HepG2 (cell line): ENCODE measurements at regions of chr16 and their contacts with region 1.

Region 1: GRCh38 chr16:57084257-57084770 is 8.1 kb upstream of the CPNE2 start:
- DNase-seq: peak; percentile 54
- ATAC-seq: peak; percentile 70
- H3K4me3 ChIP-seq: no peak overlapping the region
- H3K27ac ChIP-seq: no peak overlapping the region
- H3K4me1 ChIP-seq: peaks cover 15% of the 10 kb centered on the region
- H3K27me3 ChIP-seq: peaks cover 2 to 23% of the 10 kb centered on the region in 2 experiments; a peak in 4 of 5 replicates
- CTCF ChIP-seq: peak; percentile 97
- EP300 ChIP-seq: no peak
- POLR2A ChIP-seq: no peak
- RAD21 ChIP-seq: peak; percentile 88

Region 2: GRCh38 chr16:57167953-57168352 is 83.6 kb after region 1 on chr16:
- CTCF ChIA-PET with region 1: interaction called, 16 read pairs
- POLR2A ChIA-PET with region 1: no interaction called
- in situ Hi-C with region 1: no loop called
- intact Hi-C with region 1: loop called (anchors 2 kb)
- DNase-seq: peak; percentile 53
- ATAC-seq: peak; percentile 68
- H3K4me3 ChIP-seq: no peak overlapping the region
- H3K27ac ChIP-seq: no peak overlapping the region
- H3K4me1 ChIP-seq: peaks cover 9% of the 10 kb centered on the region
- H3K27me3 ChIP-seq: no peaks in the 10 kb centered on the region
- CTCF ChIP-seq: peak; percentile 77
- EP300 ChIP-seq: no peak
- POLR2A ChIP-seq: no peak
- RAD21 ChIP-seq: peak; percentile 49; the same call in 1 of the 2 replicates

Region 3: DNA sequence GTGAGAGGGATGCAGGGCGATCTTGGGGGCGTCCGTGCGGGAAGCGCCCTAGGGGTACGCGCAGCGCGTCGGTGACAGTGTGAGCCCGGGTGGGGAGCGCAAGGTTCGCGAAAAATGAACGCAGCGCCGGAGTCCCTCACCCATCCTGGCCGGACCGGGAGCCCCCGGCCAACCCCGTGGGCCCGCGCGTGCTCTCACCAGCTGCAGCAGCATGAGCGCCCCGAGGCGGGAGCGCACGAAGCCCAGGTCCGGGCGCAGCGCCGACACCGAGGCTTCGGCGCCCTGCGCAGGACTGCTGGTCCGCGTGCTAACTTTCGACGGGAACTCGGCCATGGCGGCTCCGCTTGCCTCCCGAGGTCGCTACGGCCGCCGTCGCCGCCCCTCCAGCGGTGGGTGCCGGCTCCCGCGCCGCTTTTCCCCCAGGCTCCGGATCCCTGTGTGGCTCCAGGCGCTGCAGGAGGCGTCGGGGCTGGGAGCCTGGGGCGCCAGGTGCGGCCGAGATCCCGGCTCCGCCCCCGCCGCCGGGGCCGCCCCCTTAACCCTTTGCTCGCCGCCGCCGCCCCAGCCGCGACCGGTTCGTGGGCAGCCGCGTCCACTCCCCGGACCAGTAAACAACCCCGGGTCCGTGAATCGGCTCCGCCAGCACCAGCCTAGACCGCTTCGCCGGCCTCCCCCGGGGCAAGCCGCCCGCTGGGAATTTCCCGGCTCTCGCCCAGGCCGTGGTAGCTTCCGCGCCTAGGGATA is 200.1 kb after region 1 on chr16 and contains the start of gene PLLP:
- CTCF ChIA-PET with region 1: no interaction called
- POLR2A ChIA-PET with region 1: no interaction called
- in situ Hi-C with region 1: no loop called
- intact Hi-C with region 1: loop called (anchors 5 kb)
- DNase-seq: no peak
- ATAC-seq: peak; percentile 68
- H3K4me3 ChIP-seq: peak within 1 kb of the TSS; percentile 75 to 91 (median 78)
- H3K27ac ChIP-seq: peak within 1 kb of the TSS; percentile 76
- H3K4me1 ChIP-seq: peaks cover 86% of the 10 kb centered on the region
- H3K27me3 ChIP-seq: peaks cover 1 to 6% of the 10 kb centered on the region in 2 experiments; a peak in 1 of 5 replicates
- CTCF ChIP-seq: no peak; the same call in 1 of the 2 replicates
- EP300 ChIP-seq: no peak
- POLR2A ChIP-seq: peak; percentile 52 to 91; a peak in 3 of 4 replicates
- RAD21 ChIP-seq: peak; percentile 61
- total RNA-seq, gene PLLP: 39.5 and 60.6 TPM in 2 replicates

Region 4: GRCh38 chr16:57413301-57413730 is 329.0 kb after region 1 on chr16:
- CTCF ChIA-PET with region 1: interaction called, 3 read pairs
- POLR2A ChIA-PET with region 1: no interaction called
- in situ Hi-C with region 1: loop called (anchors 5 kb)
- intact Hi-C with region 1: loop called (anchors 10 kb)
- DNase-seq: no peak
- ATAC-seq: no peak
- H3K4me3 ChIP-seq: no peak overlapping the region
- H3K27ac ChIP-seq: no peak overlapping the region
- H3K4me1 ChIP-seq: peaks cover 46% of the 10 kb centered on the region
- H3K27me3 ChIP-seq: peaks cover 10 to 55% of the 10 kb centered on the region in 2 experiments; a peak in 4 of 5 replicates
- CTCF ChIP-seq: no peak
- EP300 ChIP-seq: no peak
- POLR2A ChIP-seq: no peak
- RAD21 ChIP-seq: no peak